ENCODE measurements at regions of chr21 and their contacts with region 1.

Region 1: DNA sequence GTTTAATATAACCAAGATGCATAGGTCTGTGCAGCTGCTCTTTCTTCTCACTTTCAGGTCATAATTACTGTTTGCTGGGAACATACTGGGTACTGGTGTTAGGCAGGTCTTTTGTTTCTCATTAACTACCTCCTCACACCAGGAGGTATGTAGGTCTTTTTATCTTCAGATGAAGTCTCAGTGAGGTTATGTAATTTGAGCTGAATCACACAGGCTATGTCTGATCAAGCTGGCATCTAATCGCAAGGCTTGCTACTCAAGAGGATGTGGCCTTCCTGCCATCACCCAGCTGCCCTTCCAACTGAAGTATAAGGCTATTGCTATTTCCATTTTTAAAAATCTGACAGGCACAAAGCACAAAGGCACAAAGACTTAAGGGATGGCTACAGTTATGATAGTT is 96.4 kb downstream of the RUNX1 start:
- DNase-seq: no peak
- ATAC-seq: peak; percentile 27 to 75 (median 50)
- H3K4me3 ChIP-seq: no peak overlapping the region
- H3K4me3 Mint-ChIP-seq: no peak overlapping the region
- H3K27ac ChIP-seq: no peak overlapping the region
- H3K27ac Mint-ChIP-seq: peak overlapping the region in 1 of 2 donors; percentile 67
- H3K4me1 ChIP-seq: peaks cover 28 to 38% of the 10 kb centered on the region in 2 experiments
- H3K4me1 Mint-ChIP-seq: peaks cover 78 to 90% (median 82%) of the 10 kb centered on the region in 3 donors
- H3K27me3 ChIP-seq: no peaks in the 10 kb centered on the region
- H3K27me3 Mint-ChIP-seq: no peaks in the 10 kb centered on the region

Region 2: DNA sequence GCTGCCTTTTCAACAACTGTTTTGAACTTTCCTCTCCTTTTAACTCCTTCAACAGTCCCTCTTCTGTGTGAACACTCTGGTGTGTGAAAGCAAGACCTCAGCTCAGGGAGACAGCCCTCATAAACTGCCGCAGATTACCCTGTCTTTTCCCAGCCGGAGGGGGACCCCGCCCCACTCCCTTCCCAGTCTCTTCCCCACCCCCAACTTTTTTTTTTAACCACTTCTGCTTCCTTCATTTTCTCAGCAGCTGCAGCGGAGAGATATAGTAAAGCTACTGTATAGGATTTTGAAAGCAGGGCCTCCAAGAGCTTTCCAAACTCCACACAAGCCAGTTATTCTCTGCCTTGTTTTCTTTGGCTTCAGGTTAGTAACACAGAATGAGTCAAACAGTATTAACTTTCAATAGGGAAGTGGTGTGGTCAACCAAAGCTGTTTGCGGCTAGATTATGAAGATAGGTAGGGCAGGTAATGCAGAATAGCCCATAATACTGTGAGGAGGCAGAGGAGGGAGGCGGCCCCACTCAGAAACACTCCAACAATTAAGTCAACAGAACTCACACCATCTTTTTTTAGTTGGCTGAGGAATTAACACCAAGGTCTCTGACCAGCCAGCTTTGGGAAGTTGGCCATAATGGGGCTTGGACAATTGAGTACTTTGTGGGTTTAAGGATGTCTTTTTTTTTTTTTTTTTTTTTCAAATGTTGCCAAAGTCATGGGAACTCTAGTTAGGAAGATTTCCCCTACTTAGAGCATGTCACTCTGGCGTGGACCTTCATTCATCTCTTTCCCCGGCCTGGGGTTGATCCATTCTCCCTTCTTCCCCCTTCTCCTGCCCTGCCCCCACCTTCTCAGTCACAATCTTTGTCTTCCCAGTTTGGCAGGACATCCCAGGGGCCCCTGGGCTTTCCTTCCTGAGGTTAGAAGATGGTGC is 106.9 kb before region 1 on chr21:
- CTCF ChIA-PET with region 1: no interaction called
- POLR2A ChIA-PET with region 1: interaction called in 1 of 2 experiments, 13 read pairs
- DNase-seq: peak in 2 of 35 experiments; percentile 8 to 51
- ATAC-seq: peak in 2 of 4 experiments; percentile 59 to 65
- H3K4me3 ChIP-seq: no peak overlapping the region
- H3K4me3 Mint-ChIP-seq: no peak overlapping the region
- H3K27ac ChIP-seq: no peak overlapping the region
- H3K27ac Mint-ChIP-seq: peak overlapping the region; percentile 62 to 64
- H3K4me1 ChIP-seq: peaks cover 0 to 29% of the 10 kb centered on the region in 2 experiments
- H3K4me1 Mint-ChIP-seq: peaks cover 12 to 47% (median 46%) of the 10 kb centered on the region in 3 donors
- H3K27me3 ChIP-seq: no peaks in the 10 kb centered on the region
- H3K27me3 Mint-ChIP-seq: no peaks in the 10 kb centered on the region

Region 3: GRCh38 chr21:34926803-34927467 is 25.8 kb before region 1 on chr21:
- CTCF ChIA-PET with region 1: interaction called in 1 of 2 experiments, 4 read pairs
- POLR2A ChIA-PET with region 1: interaction called in 1 of 2 experiments, 11 read pairs
- DNase-seq: no peak
- ATAC-seq: no peak
- H3K4me3 ChIP-seq: no peak overlapping the region
- H3K4me3 Mint-ChIP-seq: no peak overlapping the region
- H3K27ac ChIP-seq: no peak overlapping the region
- H3K27ac Mint-ChIP-seq: peak overlapping the region in 1 of 2 donors; percentile 2
- H3K4me1 ChIP-seq: peaks cover 13 to 15% of the 10 kb centered on the region in 2 experiments
- H3K4me1 Mint-ChIP-seq: peaks cover 66 to 80% (median 77%) of the 10 kb centered on the region in 3 donors
- H3K27me3 ChIP-seq: no peaks in the 10 kb centered on the region
- H3K27me3 Mint-ChIP-seq: no peaks in the 10 kb centered on the region